ENCODE measurements at regions of chr10 and their contacts with region 1.

Region 1: GRCh38 chr10:112811740-112812551 is 138.1 kb upstream of the TCF7L2 start:
- DNase-seq: peak; percentile 72 to 98
- H3K4me3 ChIP-seq: peak overlapping the region; percentile 42; the same call in 1 of the 2 replicates
- H3K27ac ChIP-seq: peak overlapping the region; percentile 88
- H3K4me1 ChIP-seq: peaks cover 68% of the 10 kb centered on the region
- H3K27me3 ChIP-seq: no peaks in the 10 kb centered on the region
- CTCF ChIP-seq: no peak

Region 2: DNA sequence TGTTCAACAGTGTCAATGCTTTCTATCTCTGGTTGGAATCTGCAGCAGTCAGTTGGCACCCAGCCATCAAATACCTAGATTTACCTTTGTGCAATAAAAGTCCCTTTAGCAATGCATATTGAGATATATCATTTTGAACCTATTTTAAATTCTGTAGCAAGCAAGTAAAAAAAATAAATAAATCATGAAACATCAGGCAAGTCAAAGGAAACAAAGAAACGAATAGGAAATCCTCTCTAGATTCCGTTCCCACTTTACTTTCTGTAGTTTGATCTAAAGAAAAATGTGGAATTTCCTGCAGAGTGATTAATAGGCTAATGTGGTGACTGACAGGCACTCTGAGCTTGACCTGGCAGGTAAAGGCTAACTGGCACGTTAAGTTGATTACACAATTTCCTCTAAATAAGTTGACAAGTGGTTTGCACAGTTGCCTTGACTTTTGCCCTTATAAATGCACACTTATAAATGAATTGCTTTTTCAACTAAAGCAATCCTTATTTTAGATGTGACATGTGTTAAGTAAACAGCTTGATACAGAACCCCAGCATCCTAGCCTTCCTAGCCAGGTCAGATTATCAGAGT is 70.0 kb before region 1 on chr10:
- CTCF ChIA-PET with region 1: no interaction called
- POLR2A ChIA-PET with region 1: interaction called, 4 read pairs
- intact Hi-C with region 1: loop called (anchors 2 kb)
- DNase-seq: peak; percentile 27 to 91
- H3K4me3 ChIP-seq: no peak overlapping the region
- H3K27ac ChIP-seq: peak overlapping the region; percentile 78
- H3K4me1 ChIP-seq: peaks cover 41% of the 10 kb centered on the region
- H3K27me3 ChIP-seq: no peaks in the 10 kb centered on the region
- CTCF ChIP-seq: no peak

Region 3: DNA sequence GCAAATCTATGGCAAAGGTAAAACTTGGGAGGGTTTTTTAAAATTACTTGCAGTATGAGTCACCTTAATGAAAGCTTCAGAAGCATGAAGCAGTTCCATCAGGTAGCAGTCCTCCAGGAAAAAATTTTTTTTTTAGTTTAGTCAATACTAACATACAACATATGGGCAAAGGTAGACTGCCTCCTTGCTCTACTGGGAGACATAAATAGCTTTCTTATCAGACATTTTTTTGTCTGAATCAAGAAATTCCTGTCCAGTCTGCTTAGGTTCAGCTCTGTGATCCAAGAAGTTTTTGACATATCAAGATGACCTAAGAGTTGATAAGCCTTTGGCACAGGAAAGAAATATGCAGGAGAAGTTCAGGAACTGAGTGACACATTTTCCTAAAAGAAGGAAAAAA is 33.4 kb before region 1 on chr10:
- CTCF ChIA-PET with region 1: no interaction called
- POLR2A ChIA-PET with region 1: interaction called, 11 read pairs
- intact Hi-C with region 1: no loop called
- DNase-seq: peak in 1 of 2 experiments; percentile 87
- H3K4me3 ChIP-seq: no peak overlapping the region
- H3K27ac ChIP-seq: peak overlapping the region; percentile 83
- H3K4me1 ChIP-seq: peaks cover 34% of the 10 kb centered on the region
- H3K27me3 ChIP-seq: no peaks in the 10 kb centered on the region
- CTCF ChIP-seq: no peak

Region 4: GRCh38 chr10:112949875-112950507 is 138.0 kb after region 1 on chr10 and contains the start of gene TCF7L2:
- CTCF ChIA-PET with region 1: no interaction called
- POLR2A ChIA-PET with region 1: interaction called, 7 read pairs
- intact Hi-C with region 1: loop called (anchors 1 kb)
- DNase-seq: peak; percentile 90
- H3K4me3 ChIP-seq: peak within 1 kb of the TSS; percentile 75
- H3K27ac ChIP-seq: peak within 1 kb of the TSS; percentile 69
- H3K4me1 ChIP-seq: peaks cover 27% of the 10 kb centered on the region
- H3K27me3 ChIP-seq: no peaks in the 10 kb centered on the region
- CTCF ChIP-seq: no peak
- total RNA-seq, gene TCF7L2: 9.9 and 14.8 TPM in 2 replicates

Region 5: GRCh38 chr10:113087165-113088029 is 275.5 kb after region 1 on chr10:
- CTCF ChIA-PET with region 1: no interaction called
- POLR2A ChIA-PET with region 1: no interaction called
- intact Hi-C with region 1: loop called (anchors 1 kb)
- DNase-seq: peak; percentile 67 to 97
- H3K4me3 ChIP-seq: no peak overlapping the region; the same call in 1 of the 2 replicates
- H3K27ac ChIP-seq: peak overlapping the region; percentile 96
- H3K4me1 ChIP-seq: peaks cover 56% of the 10 kb centered on the region
- H3K27me3 ChIP-seq: no peaks in the 10 kb centered on the region
- CTCF ChIP-seq: no peak

Region 6: GRCh38 chr10:113385021-113385999 is 573.4 kb after region 1 on chr10:
- CTCF ChIA-PET with region 1: no interaction called
- POLR2A ChIA-PET with region 1: no interaction called
- intact Hi-C with region 1: loop called (anchors 10 kb)
- DNase-seq: peak; percentile 50 to 61
- H3K4me3 ChIP-seq: no peak overlapping the region
- H3K27ac ChIP-seq: no peak overlapping the region
- H3K4me1 ChIP-seq: 0 out of 2 replicates have a peak, but pooled peaks cover 14% of the 10 kb centered on the region
- H3K27me3 ChIP-seq: no peaks in the 10 kb centered on the region
- CTCF ChIP-seq: peak; percentile 78